ENCODE measurements at regions of chr12 and their contacts with region 1.

Region 1: GRCh38 chr12:120265473-120266179 is at the start of gene PXN:
- DNase-seq: no peak
- H3K4me3 ChIP-seq: peak within 1 kb of the TSS; percentile 77
- H3K27ac ChIP-seq: peak within 1 kb of the TSS; percentile 21
- H3K27me3 ChIP-seq: no peaks in the 10 kb centered on the region
- CTCF ChIP-seq: peak; percentile 66
- polyA plus RNA-seq, gene PXN: 35.0 and 48.1 TPM in 2 replicates

Region 2: DNA sequence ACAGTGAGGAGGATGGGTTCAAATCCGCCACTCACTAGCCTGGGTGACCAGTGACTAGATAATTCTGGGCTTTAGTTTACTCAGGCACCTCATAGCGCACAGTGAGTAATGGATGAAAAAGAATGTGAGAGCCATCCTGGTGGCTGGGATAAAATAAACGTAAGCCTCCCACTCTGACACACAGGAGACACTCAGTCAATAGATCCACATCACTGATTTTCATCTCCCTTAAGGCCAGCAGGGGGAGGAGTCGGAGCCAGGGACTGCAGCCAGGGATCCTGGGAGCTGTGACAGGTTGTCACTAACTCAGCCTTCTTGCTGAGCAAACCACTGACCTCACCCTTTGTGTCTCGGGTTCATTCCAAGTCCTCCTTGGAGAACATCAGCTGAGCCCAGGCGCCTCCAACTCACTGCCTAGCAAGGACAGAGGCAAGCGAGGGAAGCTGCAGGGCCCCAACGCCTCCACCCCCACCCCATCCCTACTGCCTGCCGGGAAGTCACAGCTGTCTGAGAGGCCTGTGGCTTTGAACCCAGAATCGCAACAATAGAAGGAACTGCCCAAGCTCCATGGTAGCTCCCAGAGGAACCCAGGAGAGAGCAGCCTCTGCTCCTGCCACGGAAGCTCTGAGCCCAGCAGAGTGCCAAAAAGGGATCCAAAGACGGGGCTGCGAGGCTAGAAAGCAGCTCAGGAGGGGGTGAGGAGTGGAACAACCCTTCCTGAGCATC is 30.8 kb before region 1 on chr12:
- CTCF ChIA-PET with region 1: interaction called, 685 read pairs
- POLR2A ChIA-PET with region 1: interaction called, 118 read pairs
- DNase-seq: peak; percentile 70
- H3K4me3 ChIP-seq: peak overlapping the region; percentile 27; the same call in 1 of the 2 replicates
- H3K27ac ChIP-seq: peak overlapping the region; percentile 96
- H3K27me3 ChIP-seq: no peaks in the 10 kb centered on the region
- CTCF ChIP-seq: peak; percentile 57

Region 3: GRCh38 chr12:120249875-120250795 is 15.5 kb before region 1 on chr12:
- CTCF ChIA-PET with region 1: interaction called, 30 read pairs
- POLR2A ChIA-PET with region 1: interaction called, 4 read pairs
- DNase-seq: no peak
- H3K4me3 ChIP-seq: no peak overlapping the region
- H3K27ac ChIP-seq: peak overlapping the region; percentile 47
- H3K27me3 ChIP-seq: no peaks in the 10 kb centered on the region
- CTCF ChIP-seq: no peak

Region 4: GRCh38 chr12:120276734-120277133 is 11.1 kb after region 1 on chr12:
- CTCF ChIA-PET with region 1: interaction called, 21 read pairs
- POLR2A ChIA-PET with region 1: no interaction called
- DNase-seq: no peak
- H3K4me3 ChIP-seq: no peak overlapping the region
- H3K27ac ChIP-seq: no peak overlapping the region
- H3K27me3 ChIP-seq: no peaks in the 10 kb centered on the region
- CTCF ChIP-seq: no peak

Region 5: DNA sequence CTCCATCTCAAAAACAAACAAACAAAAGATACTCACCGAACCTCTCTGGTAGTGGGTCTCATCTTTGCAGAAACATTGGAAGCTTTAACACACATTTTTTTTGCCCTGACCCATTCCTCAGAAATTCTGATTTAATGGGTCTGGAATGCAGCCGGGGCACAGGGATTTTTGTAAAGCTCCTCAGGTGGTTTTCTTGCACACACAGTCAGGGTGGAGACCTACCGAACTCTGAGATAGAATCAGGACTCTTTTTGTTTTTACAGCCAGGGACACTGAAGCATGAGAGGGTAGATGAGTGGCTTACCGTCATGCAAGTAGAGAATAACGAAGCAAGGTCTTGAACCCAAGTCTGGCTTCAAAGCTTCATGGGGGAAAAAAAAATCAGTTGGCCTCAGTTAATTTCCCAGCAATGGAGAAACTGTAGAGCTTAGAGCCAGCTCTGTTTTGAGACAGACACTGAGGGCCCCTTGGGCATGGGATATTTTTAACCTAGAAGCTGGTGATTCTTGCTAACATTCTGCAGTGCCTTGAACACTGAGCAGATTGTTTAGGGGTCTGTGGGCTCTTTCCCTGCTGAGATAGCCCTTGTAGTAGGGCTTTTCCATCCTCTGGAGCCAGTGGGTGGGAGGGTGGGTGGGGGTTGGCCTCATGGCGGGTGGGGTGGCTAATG is 21.3 kb after region 1 on chr12:
- CTCF ChIA-PET with region 1: interaction called, 18 read pairs
- POLR2A ChIA-PET with region 1: interaction called, 71 read pairs
- DNase-seq: no peak
- H3K4me3 ChIP-seq: no peak overlapping the region
- H3K27ac ChIP-seq: no peak overlapping the region
- H3K27me3 ChIP-seq: no peaks in the 10 kb centered on the region
- CTCF ChIP-seq: no peak

Region 6: DNA sequence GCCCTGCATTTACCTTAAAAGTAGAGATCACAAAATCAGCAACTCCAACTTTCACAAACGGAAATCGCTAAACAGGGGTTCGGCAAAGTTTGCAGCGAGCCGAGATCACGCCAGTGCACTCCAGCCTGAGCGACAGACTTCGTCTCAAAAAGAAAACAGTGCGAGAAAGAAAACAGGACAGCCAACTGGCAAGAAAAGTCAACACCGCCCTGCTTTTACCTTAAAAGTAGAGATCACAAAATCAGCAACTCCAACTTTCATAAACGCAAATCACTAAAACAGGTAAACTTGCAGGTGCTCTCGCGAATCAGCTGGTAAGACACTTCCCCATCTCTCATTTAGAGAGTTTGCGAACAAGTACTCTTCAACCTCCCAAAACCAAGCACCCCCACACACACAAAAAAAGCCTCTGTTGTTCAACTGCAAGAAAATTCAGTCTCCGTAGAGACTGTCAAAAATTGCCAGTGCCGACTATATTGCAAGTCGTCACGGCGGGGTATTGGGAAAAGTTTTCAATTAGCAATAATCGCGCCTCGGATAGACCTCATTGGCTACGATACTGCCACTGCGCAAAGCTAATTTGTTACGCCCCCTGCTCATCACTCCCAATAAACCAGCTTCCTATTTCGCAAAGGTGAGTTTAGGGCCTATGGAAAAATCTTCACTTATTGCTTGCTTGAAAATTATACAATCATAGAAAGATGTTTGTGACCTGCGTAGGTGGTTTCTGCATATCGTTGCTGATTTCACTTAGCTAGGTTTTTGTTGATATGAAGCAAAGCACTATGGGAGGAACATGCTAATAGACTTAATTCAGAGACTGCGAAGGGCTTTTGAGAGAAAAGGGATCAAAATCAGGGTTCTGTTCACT is 27.3 kb after region 1 on chr12 and contains the start of gene RNU4-1:
- CTCF ChIA-PET with region 1: interaction called, 18 read pairs
- POLR2A ChIA-PET with region 1: interaction called, 71 read pairs
- DNase-seq: peak; percentile 95
- H3K4me3 ChIP-seq: peak within 1 kb of the TSS; percentile 62
- H3K27ac ChIP-seq: peak within 1 kb of the TSS; percentile 100
- H3K27me3 ChIP-seq: no peaks in the 10 kb centered on the region
- CTCF ChIP-seq: no peak
- polyA plus RNA-seq, gene RNU4-1: under 0.01 TPM in 1 of 2 replicates, not detected in the other

Region 7: GRCh38 chr12:120614873-120615272 is 349.2 kb after region 1 on chr12:
- CTCF ChIA-PET with region 1: no interaction called
- POLR2A ChIA-PET with region 1: no interaction called
- DNase-seq: no peak
- H3K4me3 ChIP-seq: no peak overlapping the region
- H3K27ac ChIP-seq: no peak overlapping the region
- H3K27me3 ChIP-seq: peaks cover 21% of the 10 kb centered on the region
- CTCF ChIP-seq: no peak

Region 8: DNA sequence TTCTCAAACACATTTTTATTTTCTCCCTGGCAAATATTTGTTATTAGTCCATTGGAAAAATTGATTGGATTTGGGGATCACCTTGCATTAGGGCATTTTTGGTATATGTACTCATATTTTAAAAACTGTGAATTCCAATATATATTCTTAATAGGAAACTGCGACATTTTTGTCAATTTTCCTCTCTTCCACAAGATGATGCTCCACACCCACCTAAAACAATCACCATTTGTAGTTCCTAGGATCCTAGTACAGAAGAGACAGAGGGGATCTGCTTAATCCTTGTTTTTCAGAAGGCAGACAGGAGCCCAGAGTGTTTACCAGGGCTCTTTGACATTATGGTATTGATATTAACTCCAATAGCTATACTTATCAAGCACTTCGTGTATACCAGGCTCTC is 796.2 kb after region 1 on chr12:
- CTCF ChIA-PET with region 1: no interaction called
- POLR2A ChIA-PET with region 1: no interaction called
- DNase-seq: no peak
- H3K4me3 ChIP-seq: no peak overlapping the region
- H3K27ac ChIP-seq: no peak overlapping the region
- H3K27me3 ChIP-seq: peaks cover 4% of the 10 kb centered on the region
- CTCF ChIP-seq: peak; percentile 46